GM12878 (cell line): ENCODE measurements at regions of chr20 and their contacts with region 1.

Region 1: DNA sequence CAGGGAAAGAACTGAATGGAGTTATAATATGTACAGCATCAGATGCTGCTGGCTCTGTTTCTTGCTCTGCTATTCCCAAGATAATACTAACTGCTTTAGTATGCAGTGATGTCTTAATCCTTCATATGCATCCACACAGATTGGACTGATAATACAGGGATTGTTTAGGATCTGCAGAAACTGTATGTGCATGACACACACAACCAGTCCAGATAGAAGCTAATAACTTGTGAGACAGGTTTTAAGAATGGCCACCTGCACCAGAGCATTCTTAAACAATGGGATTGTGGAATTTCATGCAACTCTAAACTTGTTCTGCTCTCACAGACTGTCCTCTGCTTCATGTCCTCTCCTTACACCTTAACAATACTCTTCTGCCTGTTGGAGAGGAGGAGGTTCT is 90.9 kb downstream of the SPTLC3 start:
- DNase-seq: no peak
- ATAC-seq: no peak
- H3K4me3 ChIP-seq: no peak overlapping the region
- H3K27ac ChIP-seq: no peak overlapping the region
- H3K4me1 ChIP-seq: no peaks in the 10 kb centered on the region
- H3K27me3 ChIP-seq: no peaks in the 10 kb centered on the region; a peak in 2 of 4 replicates
- CTCF ChIP-seq: no peak
- EP300 ChIP-seq: no peak
- POLR2A ChIP-seq: no peak
- RAD21 ChIP-seq: no peak

Region 2: GRCh38 chr20:13111249-13111911 is 11.7 kb after region 1 on chr20:
- CTCF ChIA-PET with region 1: interaction called, 11 read pairs
- POLR2A ChIA-PET with region 1: no interaction called
- RAD21 ChIA-PET with region 1: interaction called, 5 read pairs
- SMC1A ChIA-PET with region 1: no interaction called
- in situ Hi-C with region 1: no loop called
- intact Hi-C with region 1: no loop called
- DNase-seq: no peak
- ATAC-seq: no peak
- H3K4me3 ChIP-seq: no peak overlapping the region
- H3K27ac ChIP-seq: no peak overlapping the region
- H3K4me1 ChIP-seq: no peaks in the 10 kb centered on the region
- H3K27me3 ChIP-seq: no peaks in the 10 kb centered on the region; a peak in 1 of 4 replicates
- CTCF ChIP-seq: no peak
- EP300 ChIP-seq: no peak
- POLR2A ChIP-seq: no peak
- RAD21 ChIP-seq: no peak

Region 3: DNA sequence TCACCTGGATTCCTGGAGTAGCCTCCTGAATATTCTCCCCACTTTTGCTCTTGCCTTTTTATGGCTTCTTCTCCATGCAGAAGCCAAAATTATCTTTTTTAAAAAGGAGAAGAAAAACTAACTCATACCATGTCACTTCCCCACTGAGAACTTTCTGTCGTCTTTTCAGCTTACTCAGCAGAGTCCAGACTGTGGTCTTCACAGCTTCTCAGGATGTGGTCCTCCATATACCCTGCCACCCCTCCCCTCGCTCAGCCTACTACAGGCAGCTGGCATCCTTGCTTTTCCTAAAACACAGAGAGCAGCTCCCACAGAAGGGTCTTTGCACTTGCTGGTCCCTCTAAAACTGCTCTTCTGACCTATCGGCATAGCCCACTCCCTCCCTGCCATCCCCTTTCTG is 32.0 kb after region 1 on chr20:
- CTCF ChIA-PET with region 1: no interaction called
- POLR2A ChIA-PET with region 1: no interaction called
- RAD21 ChIA-PET with region 1: no interaction called
- SMC1A ChIA-PET with region 1: no interaction called
- in situ Hi-C with region 1: no loop called
- intact Hi-C with region 1: no loop called
- DNase-seq: no peak
- ATAC-seq: no peak
- H3K4me3 ChIP-seq: no peak overlapping the region
- H3K27ac ChIP-seq: no peak overlapping the region
- H3K4me1 ChIP-seq: no peaks in the 10 kb centered on the region
- H3K27me3 ChIP-seq: peaks cover 0 to 2% of the 10 kb centered on the region in 2 experiments; a peak in 2 of 4 replicates
- CTCF ChIP-seq: no peak
- EP300 ChIP-seq: no peak
- POLR2A ChIP-seq: no peak
- RAD21 ChIP-seq: no peak